Endothelial cell of umbilical vein (primary cell): ENCODE measurements at regions of chr11 and their contacts with region 1.

Region 1: DNA sequence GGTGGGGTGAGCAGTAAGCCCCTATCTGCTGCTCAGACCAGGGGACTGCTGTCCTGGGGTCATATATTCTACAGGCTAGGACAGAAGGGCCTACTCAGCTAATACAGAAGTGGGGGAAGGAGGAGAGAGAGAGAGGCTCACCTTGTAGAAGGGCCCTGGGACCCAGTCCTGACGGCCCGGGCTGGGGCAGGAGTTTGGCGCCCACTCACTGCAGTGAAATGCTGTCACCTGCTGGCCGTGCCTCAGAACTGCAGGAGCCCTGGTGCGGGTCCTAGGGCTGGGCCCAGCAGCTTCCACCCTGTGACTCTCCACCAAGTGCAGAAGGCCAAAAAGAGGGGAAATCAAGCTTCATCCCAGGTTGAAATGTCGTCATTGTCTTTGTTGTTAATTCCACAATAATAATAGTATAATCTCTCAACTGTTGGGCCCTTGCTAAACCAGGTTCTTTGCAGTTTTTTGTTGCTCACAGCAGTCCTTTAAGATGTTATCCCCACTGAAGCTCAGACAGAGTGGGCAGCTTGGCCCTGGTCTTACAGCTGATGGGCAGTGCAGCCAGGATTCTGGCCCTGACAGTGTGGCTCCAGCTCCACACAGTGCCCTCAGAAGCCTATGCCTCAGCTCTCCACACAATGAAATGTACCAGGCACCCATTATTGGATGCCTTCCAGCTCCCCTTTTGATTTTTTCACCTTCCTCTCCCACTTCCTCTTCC is 29.6 kb downstream of the TRIM29 start:
- DNase-seq: peak; percentile 42
- H3K4me3 ChIP-seq: no peak overlapping the region
- H3K27ac ChIP-seq: no peak overlapping the region
- H3K4me1 ChIP-seq: no peaks in the 10 kb centered on the region
- H3K27me3 ChIP-seq: peaks cover 0 to 2% of the 10 kb centered on the region in 2 experiments
- CTCF ChIP-seq: peak; percentile 96 to 99
- POLR2A ChIP-seq: no peak

Region 2: GRCh38 chr11:119624102-119624615 is 484.2 kb before region 1 on chr11:
- CTCF ChIA-PET with region 1: interaction called, 3 read pairs
- POLR2A ChIA-PET with region 1: no interaction called
- dilution Hi-C with region 1: no loop called
- intact Hi-C with region 1: loop called (anchors 1 kb)
- DNase-seq: no peak
- H3K4me3 ChIP-seq: no peak overlapping the region
- H3K27ac ChIP-seq: no peak overlapping the region
- H3K4me1 ChIP-seq: no peaks in the 10 kb centered on the region
- H3K27me3 ChIP-seq: no peaks in the 10 kb centered on the region
- CTCF ChIP-seq: peak; percentile 18 to 66
- POLR2A ChIP-seq: no peak

Region 3: DNA sequence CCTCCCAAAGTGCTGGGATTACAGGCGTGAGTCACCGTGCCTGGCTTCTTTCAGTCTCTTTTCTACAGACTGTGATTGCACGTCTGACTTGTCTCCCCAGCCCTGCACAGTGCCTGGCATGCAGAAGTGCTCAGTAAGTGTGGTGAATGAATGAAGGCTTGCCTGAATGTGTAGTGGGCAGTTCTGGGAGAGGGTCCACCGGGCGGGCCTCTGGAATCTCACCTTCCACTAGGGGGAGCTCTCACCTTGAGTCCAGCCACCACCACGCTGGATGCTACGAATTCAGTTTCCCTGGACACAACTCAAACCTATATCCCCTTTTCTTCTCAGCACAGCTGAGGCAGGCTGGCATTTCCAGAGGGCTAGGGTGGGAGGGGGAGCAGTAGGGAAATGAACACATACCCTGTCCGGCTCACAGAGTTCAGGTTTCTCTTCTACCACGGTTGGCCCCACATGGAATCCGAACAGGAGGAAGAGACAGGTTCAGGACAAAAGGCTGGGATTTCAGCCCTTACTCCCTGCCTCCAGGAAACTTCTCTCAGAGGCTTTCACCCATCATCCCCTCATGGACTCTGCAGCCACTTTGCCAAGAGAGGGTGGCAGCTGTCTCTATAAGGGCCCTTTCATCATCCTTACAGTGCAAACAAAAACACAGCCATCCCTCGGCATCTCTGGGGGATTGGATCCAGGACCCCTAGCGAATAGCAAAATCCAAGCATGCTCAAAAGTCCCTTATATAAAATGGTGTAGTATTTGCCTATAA is 466.1 kb before region 1 on chr11:
- CTCF ChIA-PET with region 1: interaction called, 22 read pairs
- POLR2A ChIA-PET with region 1: interaction called, 3 read pairs
- dilution Hi-C with region 1: no loop called
- intact Hi-C with region 1: loop called (anchors 1 kb)
- DNase-seq: peak; percentile 13
- H3K4me3 ChIP-seq: no peak overlapping the region
- H3K27ac ChIP-seq: no peak overlapping the region
- H3K4me1 ChIP-seq: no peaks in the 10 kb centered on the region
- H3K27me3 ChIP-seq: peaks cover 0 to 2% of the 10 kb centered on the region in 2 experiments
- CTCF ChIP-seq: peak; percentile 59 to 69
- POLR2A ChIP-seq: no peak

Region 4: GRCh38 chr11:119666463-119667131 is 441.7 kb before region 1 on chr11:
- CTCF ChIA-PET with region 1: interaction called, 18 read pairs
- POLR2A ChIA-PET with region 1: no interaction called
- dilution Hi-C with region 1: no loop called
- intact Hi-C with region 1: loop called (anchors 1 kb)
- DNase-seq: peak; percentile 65
- H3K4me3 ChIP-seq: no peak overlapping the region
- H3K27ac ChIP-seq: no peak overlapping the region
- H3K4me1 ChIP-seq: peaks cover 8% of the 10 kb centered on the region
- H3K27me3 ChIP-seq: no peaks in the 10 kb centered on the region
- CTCF ChIP-seq: peak; percentile 87 to 95
- POLR2A ChIP-seq: no peak

Region 5: GRCh38 chr11:120013325-120014270 is 94.7 kb before region 1 on chr11:
- CTCF ChIA-PET with region 1: no interaction called
- POLR2A ChIA-PET with region 1: no interaction called
- dilution Hi-C with region 1: no loop called
- intact Hi-C with region 1: loop called (anchors 1 kb)
- DNase-seq: peak; percentile 12
- H3K4me3 ChIP-seq: no peak overlapping the region
- H3K27ac ChIP-seq: no peak overlapping the region
- H3K4me1 ChIP-seq: no peaks in the 10 kb centered on the region
- H3K27me3 ChIP-seq: no peaks in the 10 kb centered on the region
- CTCF ChIP-seq: peak; percentile 32 to 65
- POLR2A ChIP-seq: no peak

Region 6: DNA sequence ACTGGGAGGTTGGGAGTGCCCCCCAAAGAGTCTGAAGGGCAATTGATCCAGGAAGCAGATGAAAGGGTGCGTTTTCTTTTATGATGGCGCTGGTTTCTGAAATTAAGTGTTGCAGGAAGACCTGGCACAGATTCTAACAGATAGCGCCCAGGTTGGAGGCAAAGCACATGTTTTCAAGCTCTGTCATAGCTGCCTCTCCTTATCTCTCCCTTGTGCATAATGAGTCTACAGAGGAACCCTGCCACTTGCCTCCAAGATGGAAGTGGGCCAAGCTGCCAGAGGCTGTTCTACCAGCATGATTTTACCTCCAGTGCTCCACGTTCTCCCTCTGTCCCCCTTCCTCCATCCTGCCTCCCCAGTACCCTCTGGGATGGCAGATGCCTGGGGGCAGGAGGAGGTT is 186.8 kb after region 1 on chr11:
- CTCF ChIA-PET with region 1: no interaction called
- POLR2A ChIA-PET with region 1: no interaction called
- dilution Hi-C with region 1: no loop called
- intact Hi-C with region 1: no loop called
- DNase-seq: no peak
- H3K4me3 ChIP-seq: no peak overlapping the region
- H3K27ac ChIP-seq: no peak overlapping the region
- H3K4me1 ChIP-seq: no peaks in the 10 kb centered on the region
- H3K27me3 ChIP-seq: peaks cover 12 to 14% of the 10 kb centered on the region in 2 experiments
- CTCF ChIP-seq: no peak
- POLR2A ChIP-seq: no peak

Region 7: GRCh38 chr11:120413480-120413879 is 305.2 kb after region 1 on chr11:
- CTCF ChIA-PET with region 1: no interaction called
- POLR2A ChIA-PET with region 1: no interaction called
- dilution Hi-C with region 1: no loop called
- intact Hi-C with region 1: no loop called
- DNase-seq: no peak
- H3K4me3 ChIP-seq: no peak overlapping the region
- H3K27ac ChIP-seq: no peak overlapping the region
- H3K4me1 ChIP-seq: peaks cover 6% of the 10 kb centered on the region
- H3K27me3 ChIP-seq: no peaks in the 10 kb centered on the region
- CTCF ChIP-seq: no peak
- POLR2A ChIP-seq: no peak

Region 8: GRCh38 chr11:121129362-121130340 is 1021.3 kb after region 1 on chr11:
- CTCF ChIA-PET with region 1: no interaction called
- POLR2A ChIA-PET with region 1: no interaction called
- dilution Hi-C with region 1: no loop called
- intact Hi-C with region 1: no loop called
- DNase-seq: no peak
- H3K4me3 ChIP-seq: no peak overlapping the region
- H3K27ac ChIP-seq: no peak overlapping the region
- H3K4me1 ChIP-seq: no peaks in the 10 kb centered on the region
- H3K27me3 ChIP-seq: no peaks in the 10 kb centered on the region
- CTCF ChIP-seq: no peak
- POLR2A ChIP-seq: no peak